ENCODE measurements at regions of chr12 and their contacts with region 1.

Region 1: DNA sequence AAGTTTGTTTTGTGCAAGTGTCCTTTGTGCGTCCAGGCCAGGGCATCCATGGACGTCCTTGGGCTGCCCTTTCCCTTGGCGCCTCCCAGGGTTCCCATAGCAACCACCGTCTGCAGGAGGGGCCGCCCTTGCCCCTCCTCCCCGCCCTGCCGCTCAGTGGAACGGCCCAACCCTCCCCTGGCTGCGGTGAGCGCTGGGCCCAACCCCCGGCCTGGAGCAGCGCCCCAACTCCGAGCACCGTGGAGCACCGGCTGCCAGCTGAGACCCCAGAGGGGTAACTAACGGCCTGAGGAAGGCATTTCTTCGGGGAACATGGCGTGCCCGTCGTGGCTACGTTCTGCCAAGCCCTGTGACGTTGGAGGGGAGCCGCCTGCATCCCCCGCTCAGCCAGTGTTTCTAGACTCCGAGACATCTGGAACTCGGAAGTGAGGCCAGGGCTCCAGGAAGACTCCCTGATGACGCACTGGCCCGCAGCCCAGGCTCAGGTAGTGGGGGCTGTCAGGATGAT is 5.3 kb upstream of the ACACB start:
- DNase-seq: peak; percentile 91 to 95
- ATAC-seq: peak; percentile 61 to 78 (median 67)
- H3K4me3 ChIP-seq: peak overlapping the region; percentile 71
- H3K27ac ChIP-seq: peak overlapping the region; percentile 97
- H3K4me1 ChIP-seq: peaks cover 34% of the 10 kb centered on the region
- H3K27me3 ChIP-seq: no peaks in the 10 kb centered on the region
- CTCF ChIP-seq: no peak

Region 2: GRCh38 chr12:109154451-109155438 is 43.7 kb after region 1 on chr12:
- intact Hi-C with region 1: loop called (anchors 2 to 5 kb)
- DNase-seq: peak; percentile 87 to 93
- ATAC-seq: peak; percentile 84 to 96 (median 88)
- H3K4me3 ChIP-seq: peak overlapping the region; percentile 75
- H3K27ac ChIP-seq: peak overlapping the region; percentile 80
- H3K4me1 ChIP-seq: peaks cover 64% of the 10 kb centered on the region
- H3K27me3 ChIP-seq: no peaks in the 10 kb centered on the region
- CTCF ChIP-seq: no peak

Region 3: GRCh38 chr12:109264095-109264942 is 153.3 kb after region 1 on chr12:
- intact Hi-C with region 1: loop called in 1 of 2 experiments (anchors 5 kb)
- DNase-seq: peak; percentile 78 to 87
- ATAC-seq: peak; percentile 61 to 79 (median 66)
- H3K4me3 ChIP-seq: no peak overlapping the region
- H3K27ac ChIP-seq: peak overlapping the region; percentile 55
- H3K4me1 ChIP-seq: no peaks in the 10 kb centered on the region
- H3K27me3 ChIP-seq: no peaks in the 10 kb centered on the region
- CTCF ChIP-seq: peak; percentile 66

Region 4: DNA sequence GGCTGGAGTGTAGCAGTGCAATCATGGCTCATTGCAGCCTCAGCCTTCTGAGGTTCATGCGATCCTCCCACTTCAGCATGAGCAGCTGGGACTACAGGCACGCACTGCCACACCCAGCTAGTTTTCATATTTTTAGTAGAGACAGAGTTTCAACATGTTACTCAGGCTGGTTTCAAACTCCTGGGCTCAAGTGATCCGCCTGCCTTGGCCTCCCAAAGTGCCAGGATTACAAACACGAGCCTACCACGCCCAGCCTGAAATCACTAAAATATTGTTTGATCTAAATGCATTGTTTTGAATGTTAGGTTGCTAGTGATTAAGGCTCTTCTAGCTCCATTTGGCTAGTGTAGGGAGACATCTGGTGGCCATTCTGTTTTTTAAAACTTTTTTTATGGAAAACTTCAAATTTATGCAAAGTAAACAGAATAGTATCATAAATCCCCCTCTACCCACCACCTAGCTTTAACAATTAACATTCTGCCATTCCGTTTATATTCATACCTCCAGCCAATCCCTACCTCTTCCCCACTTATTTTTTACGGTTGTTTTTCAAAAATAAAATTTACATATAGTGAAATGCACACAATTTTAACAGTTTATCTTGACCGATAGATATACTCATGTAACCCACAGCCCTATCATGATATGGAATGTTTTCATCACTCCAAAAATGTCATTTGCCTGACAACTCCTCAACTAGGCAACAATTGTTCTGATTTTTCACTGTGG is 274.5 kb after region 1 on chr12:
- intact Hi-C with region 1: loop called in 1 of 2 experiments (anchors 5 kb)
- DNase-seq: peak; percentile 29 to 61
- ATAC-seq: peak in 2 of 4 donors; percentile 72 to 91
- H3K4me3 ChIP-seq: no peak overlapping the region
- H3K27ac ChIP-seq: no peak overlapping the region
- H3K4me1 ChIP-seq: no peaks in the 10 kb centered on the region
- H3K27me3 ChIP-seq: peaks cover 0 to 5% (median 2%) of the 10 kb centered on the region in 3 donors
- CTCF ChIP-seq: peak; percentile 53

Measured in psoas muscle (tissue), 8 donors.